ENCODE measurements at regions of chr9 and their contacts with region 1.

Region 1: GRCh38 chr9:6997330-6997729 is 239.6 kb downstream of the KDM4C start:
- DNase-seq: no peak
- ATAC-seq: no peak
- H3K4me3 ChIP-seq: no peak overlapping the region
- H3K4me3 Mint-ChIP-seq: no peak overlapping the region
- H3K27ac ChIP-seq: no peak overlapping the region
- H3K27ac Mint-ChIP-seq: no peak overlapping the region
- H3K4me1 ChIP-seq: no peaks in the 10 kb centered on the region
- H3K4me1 Mint-ChIP-seq: no peaks in the 10 kb centered on the region
- H3K27me3 ChIP-seq: no peaks in the 10 kb centered on the region
- H3K27me3 Mint-ChIP-seq: no peaks in the 10 kb centered on the region
- CTCF ChIP-seq: no peak

Region 2: GRCh38 chr9:6955251-6955921 is 41.9 kb before region 1 on chr9:
- CTCF ChIA-PET with region 1: no interaction called
- POLR2A ChIA-PET with region 1: no interaction called
- intact Hi-C with region 1: no loop called
- DNase-seq: no peak
- ATAC-seq: peak; percentile 33
- H3K4me3 ChIP-seq: no peak overlapping the region
- H3K4me3 Mint-ChIP-seq: peak overlapping the region; percentile 20
- H3K27ac ChIP-seq: peak overlapping the region in 1 of 2 donors; percentile 9
- H3K27ac Mint-ChIP-seq: peak overlapping the region; percentile 81
- H3K4me1 ChIP-seq: peaks cover 20 to 22% of the 10 kb centered on the region in 2 donors
- H3K4me1 Mint-ChIP-seq: peaks cover 47% of the 10 kb centered on the region
- H3K27me3 ChIP-seq: no peaks in the 10 kb centered on the region
- H3K27me3 Mint-ChIP-seq: no peaks in the 10 kb centered on the region
- CTCF ChIP-seq: no peak

Region 3: DNA sequence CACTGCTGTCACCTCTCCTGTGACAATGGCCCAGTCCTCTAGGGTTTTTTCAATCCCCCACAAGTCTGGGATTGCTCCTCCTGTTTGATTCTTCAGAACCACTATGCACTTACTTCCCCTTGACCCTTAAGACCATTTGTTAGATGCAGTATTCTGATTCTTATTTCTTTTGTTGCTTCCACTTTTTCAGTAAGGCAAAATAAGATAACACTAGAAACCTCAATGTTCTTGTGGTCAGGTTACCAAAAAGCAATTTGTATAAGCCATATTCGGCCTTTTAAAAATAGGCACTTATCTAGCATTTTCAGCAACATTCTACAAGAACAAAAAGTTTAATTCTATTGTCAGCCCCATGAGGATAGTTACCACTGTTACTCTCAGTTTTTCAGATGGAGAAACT is 19.6 kb before region 1 on chr9:
- CTCF ChIA-PET with region 1: no interaction called
- POLR2A ChIA-PET with region 1: no interaction called
- intact Hi-C with region 1: loop called (anchors 2 kb)
- DNase-seq: no peak
- ATAC-seq: no peak
- H3K4me3 ChIP-seq: no peak overlapping the region
- H3K4me3 Mint-ChIP-seq: no peak overlapping the region
- H3K27ac ChIP-seq: no peak overlapping the region
- H3K27ac Mint-ChIP-seq: no peak overlapping the region
- H3K4me1 ChIP-seq: no peaks in the 10 kb centered on the region
- H3K4me1 Mint-ChIP-seq: peaks cover 6% of the 10 kb centered on the region
- H3K27me3 ChIP-seq: no peaks in the 10 kb centered on the region
- H3K27me3 Mint-ChIP-seq: no peaks in the 10 kb centered on the region
- CTCF ChIP-seq: no peak